K562 (cell line): ENCODE measurements at regions of chr6 and their contacts with region 1.

Region 1: GRCh38 chr6:56851541-56852259 is 103.2 kb upstream of the BEND6 start:
- DNase-seq: peak in 2 of 4 experiments; percentile 40 to 55
- ATAC-seq: peak; percentile 92
- H3K4me3 ChIP-seq: no peak overlapping the region
- H3K27ac ChIP-seq: no peak overlapping the region
- H3K4me1 ChIP-seq: no peaks in the 10 kb centered on the region; a peak in 1 of 5 replicates
- H3K27me3 ChIP-seq: no peaks in the 10 kb centered on the region
- CTCF ChIP-seq: peak; percentile 47 to 70 (median 59); a peak in 5 of 6 replicates
- EP300 ChIP-seq: no peak
- POLR2A ChIP-seq: no peak
- RAD21 ChIP-seq: peak; percentile 60 to 73

Region 2: DNA sequence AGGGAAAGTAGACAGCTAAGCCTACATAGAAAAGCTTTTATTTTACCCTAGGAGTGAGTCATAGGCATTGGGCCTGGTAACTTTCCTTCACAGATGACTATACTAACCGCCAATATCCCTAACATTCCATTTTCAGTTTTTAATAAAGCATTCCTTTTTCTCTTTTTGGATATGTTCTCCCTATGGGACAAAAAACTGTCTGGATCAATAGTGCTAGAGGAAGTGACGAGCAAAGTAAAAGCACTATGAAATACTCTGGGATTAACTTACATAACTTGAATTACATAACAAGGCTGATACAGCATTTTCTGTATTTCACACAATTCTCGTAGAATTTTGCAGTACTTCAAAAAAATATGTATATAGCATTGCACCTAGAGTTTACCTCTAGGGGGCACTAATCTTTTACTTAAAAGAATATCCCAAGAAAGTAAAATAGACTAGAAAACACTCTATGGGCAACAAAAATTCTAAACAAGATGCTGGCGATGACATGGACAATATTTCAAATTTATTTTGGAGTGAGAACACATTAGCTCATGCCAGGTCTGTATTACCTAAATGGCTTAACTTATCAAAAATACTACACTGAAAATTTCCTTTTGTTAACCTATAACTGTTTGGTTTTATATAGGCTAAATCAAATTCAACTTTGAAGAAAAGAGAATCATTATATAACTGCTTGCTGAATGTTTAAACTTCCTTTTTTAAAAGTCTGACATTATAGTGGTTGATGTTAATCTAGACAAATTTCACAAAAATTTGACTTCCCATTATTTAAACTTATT is 142.7 kb before region 1 on chr6:
- CTCF ChIA-PET with region 1: no interaction called
- POLR2A ChIA-PET with region 1: no interaction called
- in situ Hi-C with region 1: no loop called
- intact Hi-C with region 1: loop called (anchors 5 kb)
- DNase-seq: peak; percentile 8 to 45 (median 24)
- ATAC-seq: peak; percentile 78
- H3K4me3 ChIP-seq: no peak overlapping the region
- H3K27ac ChIP-seq: no peak overlapping the region
- H3K4me1 ChIP-seq: no peaks in the 10 kb centered on the region
- H3K27me3 ChIP-seq: no peaks in the 10 kb centered on the region
- CTCF ChIP-seq: peak in 2 of 3 experiments; percentile 43 to 64; a peak in 4 of 6 replicates
- EP300 ChIP-seq: no peak
- POLR2A ChIP-seq: no peak
- RAD21 ChIP-seq: peak; percentile 46 to 62

Region 3: GRCh38 chr6:56814802-56815201 is 36.9 kb before region 1 on chr6:
- CTCF ChIA-PET with region 1: no interaction called
- POLR2A ChIA-PET with region 1: interaction called, 4 read pairs
- in situ Hi-C with region 1: no loop called
- intact Hi-C with region 1: loop called (anchors 5 kb)
- DNase-seq: no peak
- ATAC-seq: no peak
- H3K4me3 ChIP-seq: no peak overlapping the region
- H3K27ac ChIP-seq: no peak overlapping the region
- H3K4me1 ChIP-seq: no peaks in the 10 kb centered on the region
- H3K27me3 ChIP-seq: no peaks in the 10 kb centered on the region; a peak in 1 of 5 replicates
- CTCF ChIP-seq: no peak
- EP300 ChIP-seq: no peak
- POLR2A ChIP-seq: no peak
- RAD21 ChIP-seq: no peak

Region 4: GRCh38 chr6:56840467-56841371 is 11.0 kb before region 1 on chr6:
- CTCF ChIA-PET with region 1: no interaction called
- POLR2A ChIA-PET with region 1: no interaction called
- in situ Hi-C with region 1: no loop called
- intact Hi-C with region 1: no loop called
- DNase-seq: no peak
- ATAC-seq: no peak
- H3K4me3 ChIP-seq: no peak overlapping the region
- H3K27ac ChIP-seq: no peak overlapping the region
- H3K4me1 ChIP-seq: peaks cover 0 to 13% of the 10 kb centered on the region in 2 experiments; a peak in 3 of 5 replicates
- H3K27me3 ChIP-seq: peaks cover 8 to 16% of the 10 kb centered on the region in 2 experiments; a peak in 4 of 5 replicates
- CTCF ChIP-seq: no peak
- EP300 ChIP-seq: no peak
- POLR2A ChIP-seq: no peak
- RAD21 ChIP-seq: no peak

Region 5: GRCh38 chr6:56902641-56903464 is 51.2 kb after region 1 on chr6:
- CTCF ChIA-PET with region 1: no interaction called
- POLR2A ChIA-PET with region 1: no interaction called
- in situ Hi-C with region 1: no loop called
- intact Hi-C with region 1: no loop called
- DNase-seq: peak; percentile 24 to 47 (median 35)
- ATAC-seq: peak; percentile 70
- H3K4me3 ChIP-seq: no peak overlapping the region
- H3K27ac ChIP-seq: no peak overlapping the region
- H3K4me1 ChIP-seq: peaks cover 0 to 4% of the 10 kb centered on the region in 2 experiments; a peak in 2 of 5 replicates
- H3K27me3 ChIP-seq: no peaks in the 10 kb centered on the region
- CTCF ChIP-seq: peak in 2 of 3 experiments; percentile 53 to 81; a peak in 4 of 6 replicates
- EP300 ChIP-seq: no peak
- POLR2A ChIP-seq: no peak
- RAD21 ChIP-seq: peak; percentile 56 to 73

Region 6: GRCh38 chr6:56984361-56984760 is 132.7 kb after region 1 on chr6:
- CTCF ChIA-PET with region 1: no interaction called
- POLR2A ChIA-PET with region 1: no interaction called
- in situ Hi-C with region 1: no loop called
- intact Hi-C with region 1: no loop called
- DNase-seq: no peak
- ATAC-seq: no peak
- H3K4me3 ChIP-seq: no peak overlapping the region
- H3K27ac ChIP-seq: no peak overlapping the region
- H3K4me1 ChIP-seq: no peaks in the 10 kb centered on the region
- H3K27me3 ChIP-seq: no peaks in the 10 kb centered on the region
- CTCF ChIP-seq: no peak
- EP300 ChIP-seq: no peak
- POLR2A ChIP-seq: no peak
- RAD21 ChIP-seq: no peak

Region 7: DNA sequence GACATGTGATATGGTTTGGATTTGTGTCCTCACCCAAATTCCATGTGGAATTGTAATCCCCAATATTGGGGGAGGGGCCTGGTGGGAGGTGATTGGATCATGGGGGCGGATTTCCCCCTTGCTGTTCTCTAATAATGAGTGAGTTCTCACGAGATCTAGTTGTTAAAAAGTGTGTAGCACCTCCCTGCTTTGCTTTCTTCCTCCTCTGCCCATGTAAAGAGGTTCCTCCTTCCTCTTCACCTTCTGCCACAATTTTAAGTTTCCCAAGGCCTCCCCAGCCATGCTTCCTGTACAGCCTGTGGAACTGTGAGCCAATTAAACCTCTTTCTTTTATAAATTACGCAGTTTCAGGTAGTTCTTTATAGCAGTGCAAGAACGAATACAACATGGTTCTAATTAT is 236.2 kb after region 1 on chr6:
- CTCF ChIA-PET with region 1: no interaction called
- POLR2A ChIA-PET with region 1: no interaction called
- in situ Hi-C with region 1: no loop called
- intact Hi-C with region 1: no loop called
- DNase-seq: peak in 1 of 4 experiments; percentile 32
- ATAC-seq: no peak
- H3K4me3 ChIP-seq: no peak overlapping the region
- H3K27ac ChIP-seq: peak overlapping the region; percentile 34; the same call in 1 of the 3 replicates
- H3K4me1 ChIP-seq: peaks cover 9 to 19% of the 10 kb centered on the region in 2 experiments
- H3K27me3 ChIP-seq: no peaks in the 10 kb centered on the region
- CTCF ChIP-seq: no peak
- EP300 ChIP-seq: no peak
- POLR2A ChIP-seq: no peak
- RAD21 ChIP-seq: no peak